Heart right ventricle (tissue), 16 donors: ENCODE measurements at regions of chr11 and their contacts with region 1.

Region 1: DNA sequence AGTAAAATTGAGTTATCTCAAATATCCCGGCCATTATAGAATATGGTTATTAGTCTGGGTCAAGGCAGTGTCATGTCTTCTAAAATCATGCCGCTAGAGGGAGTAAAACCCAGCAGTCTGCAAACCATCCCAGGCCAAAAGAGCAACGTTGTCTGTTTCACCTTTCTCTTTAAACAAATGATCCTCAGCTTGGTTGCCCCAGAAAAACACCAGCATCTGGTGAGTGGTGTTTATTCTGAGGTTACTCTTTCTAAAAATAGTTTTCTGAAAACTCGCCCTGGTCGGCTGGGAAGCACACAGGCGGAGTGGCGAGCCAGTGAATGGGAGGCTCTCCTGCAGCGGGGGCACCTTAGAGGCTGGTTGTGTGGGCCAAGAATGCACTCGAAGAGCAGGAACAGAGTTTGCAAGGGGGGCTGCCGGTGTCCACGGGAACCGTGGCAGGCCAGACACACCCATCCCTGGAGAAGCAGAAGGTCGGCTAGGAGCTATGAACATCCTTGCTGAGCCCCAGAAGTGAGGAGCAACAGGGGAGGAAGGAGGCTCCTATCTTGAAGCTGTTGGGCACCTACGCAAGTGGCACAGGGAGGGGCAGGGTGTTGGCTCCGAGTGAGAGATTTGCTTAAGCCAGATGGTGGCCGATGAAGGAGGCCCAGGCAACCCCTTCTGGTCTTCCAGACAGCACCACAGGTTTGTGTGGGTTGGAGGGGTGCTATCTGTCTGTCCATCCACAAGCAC is 297.1 kb downstream of the ETS1 start:
- DNase-seq: peak; percentile 29 to 76
- ATAC-seq: peak; percentile 81 to 91 (median 89)
- H3K4me3 ChIP-seq: peak overlapping the region in 7 of 10 donors; percentile 17 to 43 (median 29)
- H3K27ac ChIP-seq: peak overlapping the region in 9 of 10 donors; percentile 24 to 83 (median 65)
- H3K4me1 ChIP-seq: peaks cover 2 to 53% (median 39%) of the 10 kb centered on the region in 9 donors
- H3K27me3 ChIP-seq: no peaks in the 10 kb centered on the region
- CTCF ChIP-seq: peak; percentile 81 to 94 (median 88)

Region 2: DNA sequence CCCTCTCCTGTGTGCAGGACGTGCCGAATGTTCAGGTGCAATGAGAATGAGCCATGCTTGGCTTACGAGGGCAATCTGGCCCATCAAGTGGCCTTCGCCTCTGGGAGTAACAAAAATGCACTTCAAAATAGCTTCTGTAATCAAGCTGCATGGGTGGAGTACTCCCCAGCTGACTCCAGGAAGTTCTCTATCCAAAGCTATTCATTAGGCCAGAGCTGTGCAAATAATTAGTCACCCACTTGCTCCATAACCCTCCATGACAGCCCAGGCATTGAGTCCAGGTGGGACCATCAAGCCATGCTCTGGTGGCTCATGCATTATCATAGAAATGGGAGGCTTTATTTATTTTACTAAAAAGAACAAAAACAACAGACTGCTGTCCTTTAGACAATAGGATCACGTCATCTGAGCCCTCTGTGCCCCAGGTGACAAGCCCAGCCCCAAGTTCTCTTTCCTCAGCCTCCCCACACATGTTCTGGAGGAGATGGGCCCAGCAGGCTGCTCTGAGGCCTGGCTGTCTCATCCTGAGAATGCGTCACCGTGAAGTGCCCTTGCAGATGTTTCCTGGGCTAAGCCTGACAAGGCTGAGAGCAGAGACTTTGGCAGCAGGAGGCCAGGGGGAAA is 52.4 kb after region 1 on chr11:
- intact Hi-C with region 1: loop called in 2 of 10 experiments (anchors 5 kb)
- DNase-seq: peak; percentile 30 to 75
- ATAC-seq: peak; percentile 86 to 96 (median 92)
- H3K4me3 ChIP-seq: no peak overlapping the region
- H3K27ac ChIP-seq: peak overlapping the region in 9 of 10 donors; percentile 61 to 83 (median 76)
- H3K4me1 ChIP-seq: peaks cover 0 to 43% (median 34%) of the 10 kb centered on the region in 9 donors
- H3K27me3 ChIP-seq: no peaks in the 10 kb centered on the region
- CTCF ChIP-seq: no peak

Region 3: DNA sequence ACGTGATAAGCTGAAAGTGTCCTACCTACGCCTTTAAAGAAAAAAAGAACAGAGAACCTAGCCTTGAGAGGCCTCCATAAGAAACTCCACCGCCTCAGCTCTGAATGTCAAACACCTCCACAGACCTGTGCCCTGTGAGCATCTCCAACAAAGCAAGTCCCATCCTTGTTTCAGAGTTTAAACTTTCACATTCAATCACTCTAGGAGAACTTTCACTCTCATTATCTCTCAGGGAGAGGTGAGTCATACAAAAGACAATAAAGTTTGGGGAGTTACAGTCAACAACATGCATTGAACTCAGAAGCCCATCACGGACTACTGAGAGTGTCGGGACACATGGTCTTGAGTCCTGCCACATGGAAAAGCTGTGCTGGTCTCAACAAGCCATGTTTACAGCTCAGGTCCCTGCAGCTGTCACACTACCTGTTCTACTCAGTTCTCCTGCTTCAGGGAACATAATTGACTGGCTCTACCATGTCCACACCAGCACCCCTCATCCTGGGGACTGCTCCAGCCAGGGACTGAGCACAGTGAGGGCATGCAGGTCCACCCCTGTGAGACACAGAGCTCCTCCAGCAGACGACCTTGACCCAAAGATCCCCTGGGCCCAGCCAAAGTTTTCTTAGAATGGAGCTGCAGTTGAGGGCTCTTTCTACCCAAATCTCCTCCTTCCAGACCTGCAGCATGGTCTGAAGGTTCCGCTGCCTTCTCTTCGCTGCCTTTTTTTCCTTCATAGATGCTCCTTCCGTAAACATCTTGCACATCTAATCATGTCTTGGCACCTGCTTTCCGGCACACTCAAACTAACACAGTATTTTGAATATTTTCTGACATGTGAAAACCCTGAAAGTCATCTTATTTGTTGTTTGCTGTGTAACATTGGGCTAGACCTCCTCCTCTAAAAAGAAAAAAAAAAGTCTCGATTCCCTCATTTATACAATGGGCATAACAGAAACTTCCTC is 182.1 kb after region 1 on chr11:
- intact Hi-C with region 1: loop called in 5 of 10 experiments (anchors 5 to 10 kb)
- DNase-seq: no peak
- ATAC-seq: no peak
- H3K4me3 ChIP-seq: no peak overlapping the region
- H3K27ac ChIP-seq: peak overlapping the region in 7 of 10 donors; percentile 35 to 84 (median 50)
- H3K4me1 ChIP-seq: peaks cover 30 to 100% (median 96%) of the 10 kb centered on the region in 9 donors
- H3K27me3 ChIP-seq: no peaks in the 10 kb centered on the region
- CTCF ChIP-seq: no peak

Region 4: DNA sequence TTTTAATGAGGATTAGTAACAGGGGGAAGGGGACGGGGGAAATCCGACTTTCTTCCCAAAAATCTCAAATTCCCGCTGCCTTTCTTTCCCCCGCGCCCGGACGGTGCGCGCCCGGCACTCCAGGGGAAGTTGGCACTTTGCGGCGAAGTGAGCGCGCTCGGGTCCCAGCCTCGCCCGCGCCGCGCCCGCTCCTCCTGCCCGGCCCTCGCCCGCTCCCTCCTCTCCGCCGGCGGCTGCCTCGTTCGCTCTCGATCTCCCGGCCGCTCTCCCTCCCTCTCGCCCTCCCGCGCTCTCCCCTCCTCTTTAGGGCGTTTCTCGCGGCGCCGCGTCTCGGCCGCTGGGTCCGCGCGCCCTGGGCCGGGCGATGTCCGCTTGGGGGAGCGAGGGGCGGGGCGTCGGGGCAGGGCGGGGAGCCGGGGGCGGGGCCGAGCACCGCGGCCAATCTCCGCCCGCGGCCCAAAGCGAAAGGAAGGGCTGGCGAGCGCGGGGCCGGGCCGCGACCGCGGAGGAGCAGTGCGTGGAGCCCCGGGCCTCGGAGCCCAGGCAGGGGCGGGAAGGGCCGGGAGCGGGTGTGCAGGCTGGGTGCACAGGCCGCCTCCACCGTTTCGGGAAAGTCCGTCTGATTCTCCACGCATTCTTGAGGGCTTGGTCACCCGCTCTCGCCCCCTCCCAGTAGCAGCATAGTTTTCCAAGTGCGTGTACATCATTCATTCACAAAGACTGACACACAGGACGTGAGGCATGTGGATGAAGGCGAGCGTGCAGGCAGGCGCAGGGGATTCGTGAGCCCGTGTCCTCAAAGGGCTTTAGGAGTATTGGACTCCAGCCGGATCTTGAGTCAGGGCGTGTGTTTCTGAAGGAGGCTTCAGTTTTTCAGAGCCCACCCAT is 232.0 kb after region 1 on chr11:
- intact Hi-C with region 1: loop called in 1 of 10 experiments (anchors 5 kb)
- DNase-seq: peak; percentile 95 to 96
- ATAC-seq: peak; percentile 93 to 99 (median 96)
- H3K4me3 ChIP-seq: peak overlapping the region; percentile 67 to 92 (median 81)
- H3K27ac ChIP-seq: peak overlapping the region; percentile 91 to 99 (median 98)
- H3K4me1 ChIP-seq: peaks cover 6 to 80% (median 66%) of the 10 kb centered on the region in 9 donors
- H3K27me3 ChIP-seq: no peaks in the 10 kb centered on the region
- CTCF ChIP-seq: peak in 1 of 9 donors; percentile 8

Region 5: DNA sequence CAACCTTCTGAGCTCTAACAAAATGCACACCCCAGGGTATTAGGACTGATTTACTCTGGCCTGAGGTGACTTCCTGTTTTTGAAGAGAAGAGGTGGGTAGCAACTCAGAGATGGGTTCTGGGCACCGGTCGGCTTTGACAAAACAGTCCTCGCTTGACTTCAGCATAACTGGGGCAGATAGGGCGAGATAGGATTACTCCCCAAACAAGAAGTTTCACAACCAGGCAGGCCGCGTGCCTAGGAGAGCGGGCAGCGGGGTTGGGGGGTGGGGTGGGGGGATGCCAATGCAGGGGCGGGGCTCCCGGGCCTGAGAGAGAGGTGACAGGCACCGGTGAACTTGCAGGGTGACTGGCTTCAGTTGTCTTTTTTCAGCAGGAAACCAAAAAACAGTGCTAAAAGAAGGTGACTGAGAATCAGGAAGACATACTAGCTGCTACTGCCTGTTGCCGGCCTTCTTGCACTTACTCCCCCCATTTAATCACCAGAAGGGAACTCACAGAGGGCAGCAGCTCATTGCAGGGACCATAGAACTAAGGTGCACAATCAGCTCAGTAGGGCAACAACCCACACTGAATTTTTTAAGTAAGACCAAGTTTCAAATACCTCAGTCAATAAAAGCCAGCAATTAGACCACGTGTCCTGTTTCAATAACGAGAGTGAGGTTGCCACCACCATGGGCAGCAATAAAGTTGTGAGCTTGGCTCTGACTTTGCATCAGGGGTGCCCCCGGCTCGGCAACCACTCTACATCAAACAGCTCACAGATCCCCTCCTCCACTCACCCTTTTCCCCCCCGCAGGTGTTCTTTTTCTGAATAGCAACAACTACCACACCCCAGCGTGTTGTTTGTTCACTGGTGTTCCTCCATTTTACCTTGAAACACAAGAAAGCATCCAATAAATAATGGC is 334.2 kb after region 1 on chr11:
- intact Hi-C with region 1: loop called in 1 of 10 experiments (anchors 5 kb)
- DNase-seq: no peak
- ATAC-seq: no peak
- H3K4me3 ChIP-seq: no peak overlapping the region
- H3K27ac ChIP-seq: peak overlapping the region in 1 of 10 donors; percentile 80
- H3K4me1 ChIP-seq: peaks cover 0 to 84% (median 14%) of the 10 kb centered on the region in 9 donors
- H3K27me3 ChIP-seq: no peaks in the 10 kb centered on the region
- CTCF ChIP-seq: no peak